ENCODE measurements at regions of chr11 and their contacts with region 1.

Region 1: GRCh38 chr11:629237-629583 is 2.2 kb upstream of the SCT start:
- DNase-seq: no peak
- H3K4me3 ChIP-seq: no peak overlapping the region
- H3K27ac ChIP-seq: no peak overlapping the region
- H3K4me1 ChIP-seq: peaks cover 4% of the 10 kb centered on the region
- H3K27me3 ChIP-seq: no peaks in the 10 kb centered on the region
- CTCF ChIP-seq: no peak

Region 2: DNA sequence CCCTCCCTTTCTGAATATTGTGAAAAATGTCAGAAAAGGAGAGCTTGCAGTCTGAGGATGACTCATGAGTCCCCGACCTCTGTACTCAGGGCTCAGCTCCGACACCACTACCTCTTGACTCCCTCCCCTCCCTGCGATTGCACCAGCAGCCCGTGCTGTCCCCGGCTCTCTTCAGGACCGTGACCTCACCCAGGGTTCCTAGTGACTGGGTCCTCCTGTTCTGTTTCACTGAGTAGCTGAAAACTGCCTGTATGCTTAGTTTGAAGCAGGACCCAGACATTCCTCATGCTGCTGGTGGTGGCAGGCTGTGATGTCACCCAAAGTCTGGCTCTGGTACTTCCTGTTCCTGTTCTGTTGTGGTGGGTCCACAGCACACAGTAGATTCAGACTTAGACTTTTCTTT is 41.2 kb before region 1 on chr11:
- CTCF ChIA-PET with region 1: no interaction called
- dilution Hi-C with region 1: no loop called
- in situ Hi-C with region 1: no loop called
- intact Hi-C with region 1: no loop called
- DNase-seq: no peak
- H3K4me3 ChIP-seq: no peak overlapping the region
- H3K27ac ChIP-seq: no peak overlapping the region
- H3K4me1 ChIP-seq: no peaks in the 10 kb centered on the region
- H3K27me3 ChIP-seq: no peaks in the 10 kb centered on the region
- CTCF ChIP-seq: no peak

Region 3: DNA sequence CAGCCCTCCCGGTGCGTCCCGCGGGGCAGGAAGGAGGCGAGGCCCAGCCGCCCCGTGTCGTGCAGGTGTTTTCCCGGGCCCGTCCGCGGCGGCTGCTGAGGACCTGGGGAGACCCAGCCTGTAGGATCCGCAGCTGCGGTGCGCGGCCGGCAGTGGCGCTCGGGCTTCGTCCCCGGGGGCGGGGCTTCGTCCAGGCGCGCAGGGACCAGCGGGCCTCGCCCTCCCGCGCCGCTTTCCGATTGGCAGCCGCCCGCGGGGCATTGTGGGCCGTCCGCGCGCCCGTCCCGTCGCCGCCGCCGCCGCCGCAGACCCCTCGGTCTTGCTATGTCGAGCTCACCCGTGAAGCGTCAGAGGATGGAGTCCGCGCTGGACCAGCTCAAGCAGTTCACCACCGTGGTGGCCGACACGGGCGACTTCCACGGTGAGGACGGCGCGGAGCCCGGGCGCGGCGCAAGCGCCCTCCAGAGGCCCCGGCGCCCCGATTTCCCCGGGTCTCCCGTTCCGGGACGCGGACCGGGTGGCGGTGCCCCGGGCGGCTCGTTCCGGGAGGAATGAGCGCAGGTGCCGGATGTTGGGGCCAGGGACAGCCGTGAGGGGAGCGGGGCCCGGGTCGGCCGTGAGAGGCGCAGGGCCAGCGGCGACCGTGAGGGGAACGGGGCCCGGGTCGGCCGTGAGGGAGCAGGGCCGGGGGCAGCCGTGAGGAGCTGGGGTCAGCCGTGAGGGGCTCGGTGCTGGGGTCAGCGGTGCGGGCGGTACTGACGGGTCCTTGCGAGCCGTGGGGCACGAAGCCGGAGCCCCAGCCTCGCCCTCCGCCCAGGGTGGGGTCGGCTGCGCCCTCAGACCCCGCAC is 118.2 kb after region 1 on chr11 and contains the start of gene TALDO1:
- CTCF ChIA-PET with region 1: no interaction called
- dilution Hi-C with region 1: no loop called
- in situ Hi-C with region 1: no loop called
- intact Hi-C with region 1: loop called (anchors 5 kb)
- DNase-seq: peak; percentile 86
- H3K4me3 ChIP-seq: peak within 1 kb of the TSS; percentile 87 to 92 (median 90)
- H3K27ac ChIP-seq: peak within 1 kb of the TSS; percentile 71
- H3K4me1 ChIP-seq: peaks cover 19% of the 10 kb centered on the region
- H3K27me3 ChIP-seq: no peaks in the 10 kb centered on the region
- CTCF ChIP-seq: peak; percentile 5 to 42
- total RNA-seq, gene TALDO1: 102 to 140 TPM

Measured in mammary epithelial cell (primary cell).